Right ventricle myocardium superior (tissue), 1 donor: ENCODE measurements at regions of chr3 and their contacts with region 1.

Region 1: GRCh38 chr3:98824256-98824655 is 61.1 kb downstream of the ST3GAL6 start:
- DNase-seq: no peak
- ATAC-seq: no peak

Region 2: DNA sequence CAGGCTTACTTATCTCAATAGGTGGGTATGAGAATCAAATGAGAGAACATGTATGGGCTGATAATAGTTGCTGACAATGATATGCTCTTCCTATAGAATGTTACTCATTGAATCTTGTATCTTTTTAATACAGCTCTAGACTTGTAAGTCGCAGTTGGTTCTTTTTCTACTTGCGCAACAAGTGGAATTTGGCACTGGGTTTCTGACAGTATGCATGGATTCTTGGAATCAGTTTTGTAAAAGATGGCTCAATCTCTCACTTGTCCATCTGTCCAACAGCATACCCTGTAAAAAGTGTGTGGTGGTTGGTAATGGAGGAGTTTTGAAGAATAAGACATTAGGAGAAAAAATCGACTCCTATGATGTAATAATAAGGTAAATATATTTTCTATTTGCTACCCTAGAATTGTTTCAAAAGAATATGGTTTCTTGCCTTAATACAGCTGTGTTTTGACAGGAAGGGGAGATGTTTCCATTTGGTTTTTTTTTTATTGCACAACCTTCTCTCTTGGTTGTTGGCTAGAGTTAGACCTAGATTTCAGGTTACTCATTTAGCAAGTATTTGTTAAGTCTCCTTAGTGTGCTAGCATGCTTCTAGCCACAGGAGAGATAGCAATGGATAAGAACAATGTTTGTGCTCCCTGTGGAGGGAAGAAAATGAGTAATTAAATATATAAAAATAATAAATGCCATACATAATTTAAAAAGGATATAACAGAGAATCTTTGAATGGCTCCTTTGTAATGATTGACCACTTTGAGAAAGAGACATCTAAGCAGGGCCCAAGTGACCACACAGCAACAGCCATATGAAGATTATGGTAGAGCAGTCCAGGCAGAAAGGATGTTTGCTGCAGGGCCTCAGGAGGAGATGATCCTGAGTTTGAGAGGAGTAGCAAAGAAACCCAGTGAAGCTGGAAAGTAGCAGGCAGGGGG is 39.3 kb before region 1 on chr3:
- intact Hi-C with region 1: no loop called
- DNase-seq: no peak
- ATAC-seq: peak; percentile 71

Region 3: GRCh38 chr3:98893740-98894139 is 69.5 kb after region 1 on chr3:
- intact Hi-C with region 1: loop called (anchors 10 kb)
- DNase-seq: no peak
- ATAC-seq: peak; percentile 54